ENCODE measurements at regions of chr7 and their contacts with region 1.

Region 1: DNA sequence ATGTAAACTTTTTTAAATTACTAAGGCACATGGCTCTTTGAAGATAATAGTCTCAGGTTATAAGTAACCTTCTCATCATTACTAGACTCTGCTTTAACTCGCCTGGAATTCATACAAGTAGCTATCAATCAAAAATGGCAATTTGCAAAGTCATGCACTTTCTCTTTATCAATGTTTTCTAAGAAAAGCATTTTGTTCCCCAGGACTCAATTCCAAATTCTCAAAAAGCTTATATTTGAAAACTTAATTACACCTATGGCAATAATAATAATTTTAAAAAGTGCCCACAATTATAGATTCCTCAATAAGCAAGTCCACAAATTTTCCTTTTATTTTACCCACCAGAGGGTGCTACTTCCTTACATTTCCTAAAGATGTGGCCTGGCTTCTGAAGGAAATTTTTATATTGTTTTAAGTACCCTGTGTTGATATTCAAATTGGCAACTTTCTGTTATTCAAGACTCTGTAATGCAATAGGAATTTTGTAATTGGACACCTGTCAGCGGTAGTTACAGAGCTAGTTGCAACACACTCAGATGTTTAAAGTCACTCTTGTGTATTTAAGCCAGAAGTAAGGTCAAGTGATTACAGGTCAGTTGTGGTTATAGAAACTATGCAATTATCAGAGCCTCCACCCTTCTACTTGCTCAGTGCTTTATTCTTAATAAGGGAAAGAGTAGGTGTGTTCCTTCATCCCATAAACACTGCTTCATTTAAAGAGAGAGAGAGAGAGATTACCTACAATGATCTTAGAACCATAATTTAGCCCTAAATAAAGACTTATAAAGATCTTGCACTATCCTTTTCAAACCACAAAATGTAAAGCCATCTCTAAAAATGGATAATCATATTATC is 47.1 kb upstream of the HYAL4 start:
- DNase-seq: peak; percentile 96
- H3K4me3 ChIP-seq: peak overlapping the region; percentile 11 to 47 (median 18)
- H3K27ac ChIP-seq: peak overlapping the region; percentile 51
- H3K4me1 ChIP-seq: peaks cover 13% of the 10 kb centered on the region
- H3K27me3 ChIP-seq: no peaks in the 10 kb centered on the region
- CTCF ChIP-seq: peak; percentile 36 to 50

Region 2: DNA sequence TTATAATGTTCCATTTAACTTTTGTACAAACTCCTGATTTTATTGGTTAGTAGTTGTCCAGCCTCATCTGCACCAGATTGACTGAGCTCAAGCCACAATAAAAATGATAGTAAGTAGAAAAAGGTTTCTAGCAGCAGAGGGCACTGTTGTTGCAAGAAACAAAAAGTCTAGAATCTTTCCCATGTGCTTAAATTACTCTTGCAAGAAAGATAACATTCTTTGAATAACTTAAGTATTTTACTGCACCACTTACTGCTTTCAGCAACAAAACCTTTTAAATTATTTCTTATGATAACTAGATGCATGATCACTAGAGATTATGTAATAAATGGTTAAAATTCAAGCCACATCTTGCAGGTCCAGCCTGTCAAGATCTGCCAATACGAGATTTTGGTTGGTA is 115.2 kb before region 1 on chr7:
- CTCF ChIA-PET with region 1: no interaction called
- dilution Hi-C with region 1: no loop called
- in situ Hi-C with region 1: no loop called
- intact Hi-C with region 1: loop called (anchors 1 kb)
- DNase-seq: peak; percentile 32
- H3K4me3 ChIP-seq: no peak overlapping the region
- H3K27ac ChIP-seq: no peak overlapping the region
- H3K4me1 ChIP-seq: no peaks in the 10 kb centered on the region
- H3K27me3 ChIP-seq: no peaks in the 10 kb centered on the region
- CTCF ChIP-seq: peak; percentile 52 to 57

Region 3: DNA sequence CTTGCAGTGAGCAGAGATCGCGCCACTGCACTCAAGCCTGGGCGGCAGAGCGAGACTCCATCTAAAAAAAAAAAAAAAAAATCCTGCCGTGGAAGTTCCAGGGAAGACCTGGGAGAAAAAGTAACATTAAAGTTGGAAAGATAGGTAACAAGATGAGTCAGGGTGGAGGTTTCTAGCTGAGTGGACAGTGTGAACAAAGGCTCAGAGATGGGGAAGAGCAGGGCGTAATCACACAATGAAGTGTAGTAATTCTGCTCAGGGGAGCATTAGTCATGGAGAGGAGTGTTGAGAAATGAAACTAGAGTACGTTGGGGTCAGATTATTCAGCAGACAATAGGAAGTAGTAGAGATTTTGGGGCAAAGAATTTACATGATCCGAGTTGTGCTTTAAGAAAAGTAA is 27.5 kb before region 1 on chr7:
- CTCF ChIA-PET with region 1: no interaction called
- dilution Hi-C with region 1: no loop called
- in situ Hi-C with region 1: no loop called
- intact Hi-C with region 1: loop called (anchors 2 kb)
- DNase-seq: peak; percentile 97
- H3K4me3 ChIP-seq: no peak overlapping the region
- H3K27ac ChIP-seq: peak overlapping the region; percentile 88
- H3K4me1 ChIP-seq: peaks cover 43% of the 10 kb centered on the region
- H3K27me3 ChIP-seq: no peaks in the 10 kb centered on the region
- CTCF ChIP-seq: no peak

Region 4: DNA sequence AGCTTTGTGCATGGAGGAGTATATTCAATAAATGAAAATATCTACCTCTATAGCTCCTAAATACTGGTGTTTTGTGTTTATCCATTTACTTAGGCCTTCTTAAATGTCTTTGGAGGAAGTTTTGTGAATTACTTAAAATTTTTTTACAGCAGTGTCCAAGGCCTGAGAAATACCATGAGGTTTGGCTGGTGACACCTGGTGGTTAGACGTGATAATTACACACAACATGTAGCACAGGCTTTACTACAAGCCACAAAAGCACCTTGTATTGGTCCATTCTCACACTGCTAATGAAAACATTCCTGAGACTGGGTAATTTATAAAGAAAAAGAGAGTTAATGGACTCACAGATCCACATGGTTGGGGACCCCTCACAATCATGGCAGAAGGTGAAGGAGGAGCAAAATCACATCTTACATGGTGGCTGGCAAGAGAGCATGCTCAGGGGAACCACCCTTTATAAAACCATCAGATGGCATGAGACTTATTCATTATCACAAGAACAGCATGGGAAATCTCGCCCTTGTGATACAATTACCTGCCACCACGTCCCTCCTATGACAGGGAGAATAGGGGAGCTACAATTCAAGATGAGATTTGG is 67.7 kb after region 1 on chr7:
- CTCF ChIA-PET with region 1: interaction called, 8 read pairs
- dilution Hi-C with region 1: loop called (anchors 5 kb)
- in situ Hi-C with region 1: loop called (anchors 5 kb)
- intact Hi-C with region 1: loop called (anchors 1 kb)
- DNase-seq: peak; percentile 55
- H3K4me3 ChIP-seq: no peak overlapping the region
- H3K27ac ChIP-seq: no peak overlapping the region
- H3K4me1 ChIP-seq: peaks cover 24% of the 10 kb centered on the region
- H3K27me3 ChIP-seq: no peaks in the 10 kb centered on the region
- CTCF ChIP-seq: peak; percentile 59 to 69

Measured in mammary epithelial cell (primary cell).